ENCODE measurements at regions of chr1 and their contacts with region 1.

Region 1: GRCh38 chr1:1890506-1891348 is at the start of gene GNB1:
- DNase-seq: peak; percentile 80 to 92
- H3K4me3 ChIP-seq: peak within 1 kb of the TSS; percentile 90 to 95
- H3K27ac ChIP-seq: peak within 1 kb of the TSS; percentile 92 to 96
- H3K4me1 ChIP-seq: peaks cover 0 to 69% (median 46%) of the 10 kb centered on the region in 4 donors
- H3K27me3 ChIP-seq: peaks cover 0 to 5% of the 10 kb centered on the region in 2 donors
- CTCF ChIP-seq: no peak

Region 2: GRCh38 chr1:1779706-1780597 is 110.8 kb before region 1 on chr1:
- intact Hi-C with region 1: loop called (anchors 10 kb)
- DNase-seq: peak; percentile 80 to 84
- H3K4me3 ChIP-seq: no peak overlapping the region
- H3K27ac ChIP-seq: no peak overlapping the region
- H3K4me1 ChIP-seq: peaks cover 8 to 70% (median 64%) of the 10 kb centered on the region in 4 donors
- H3K27me3 ChIP-seq: no peaks in the 10 kb centered on the region
- CTCF ChIP-seq: no peak

Measured in tibial artery (tissue), 4 donors.